GM13976 (cell line): ENCODE measurements at regions of chr7 and their contacts with region 1.

Region 1: GRCh38 chr7:44595934-44596635 is 10.3 kb upstream of the OGDH start:
- DNase-seq: no peak
- CTCF ChIP-seq: no peak

Region 2: DNA sequence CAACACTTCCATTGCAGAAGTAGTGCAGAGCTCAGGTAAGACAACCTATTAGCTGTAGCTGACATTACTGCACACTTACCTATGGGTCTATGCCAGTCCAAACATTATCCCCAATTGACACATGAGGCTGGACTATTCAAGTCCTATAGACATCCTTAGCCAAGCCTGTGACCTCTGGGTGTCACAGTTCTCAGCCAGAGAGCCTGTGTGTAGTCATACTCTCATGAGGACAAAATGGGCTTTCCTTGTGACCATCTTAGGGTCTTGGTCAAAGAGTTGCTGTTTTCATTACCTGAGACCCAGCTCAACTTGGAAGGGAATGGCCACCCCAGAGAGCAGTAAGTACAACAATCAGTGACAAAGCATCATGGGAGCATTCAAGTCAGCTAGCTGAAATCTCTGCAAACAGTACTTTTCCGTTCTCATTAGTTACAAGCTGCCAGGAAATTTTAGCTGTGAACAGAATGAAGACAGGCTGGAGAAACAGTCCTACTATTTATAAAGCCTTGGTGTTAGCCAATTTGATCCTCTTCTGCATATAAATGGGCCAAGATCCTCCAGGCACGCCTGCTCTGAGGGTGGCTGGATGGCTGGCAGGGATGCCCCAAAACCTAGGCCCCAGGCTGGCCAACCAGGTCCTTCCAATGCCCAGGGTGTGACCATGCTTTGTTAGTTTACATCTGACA is 150.0 kb before region 1 on chr7:
- in situ Hi-C with region 1: no loop called
- DNase-seq: no peak
- CTCF ChIP-seq: no peak

Region 3: DNA sequence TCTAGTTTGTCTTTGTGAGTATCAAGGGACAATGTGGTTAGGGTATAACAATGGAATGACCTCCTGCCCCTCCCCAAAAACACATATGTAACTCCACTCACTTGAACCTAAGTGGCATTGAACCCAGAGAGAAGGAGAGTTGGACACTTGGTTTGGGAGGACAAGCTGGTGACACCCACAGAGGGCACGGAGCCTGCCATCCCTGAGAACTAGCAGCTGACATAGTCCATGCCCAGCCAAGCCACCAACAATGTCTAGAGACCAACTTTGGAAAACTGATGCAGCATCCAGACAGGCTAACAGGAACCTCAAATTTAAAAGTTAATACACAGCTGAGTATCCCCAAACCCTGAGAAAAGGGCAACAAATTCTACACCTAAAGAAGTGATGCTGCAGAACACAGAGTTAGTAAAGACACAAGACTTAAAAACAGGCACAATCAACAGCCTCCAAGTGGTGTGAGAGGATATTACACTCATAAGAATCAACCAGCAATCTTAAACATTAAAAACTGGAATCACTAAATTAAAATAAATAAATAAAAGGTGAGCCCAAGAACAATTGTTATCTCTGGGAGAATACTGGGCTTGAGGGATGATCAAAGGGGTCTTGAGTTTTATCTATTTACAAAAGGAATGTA is 132.8 kb before region 1 on chr7:
- in situ Hi-C with region 1: no loop called
- DNase-seq: no peak
- CTCF ChIP-seq: no peak

Region 4: GRCh38 chr7:44847508-44847920 is 251.4 kb after region 1 on chr7:
- in situ Hi-C with region 1: loop called (anchors 10 kb)
- DNase-seq: peak; percentile 89
- CTCF ChIP-seq: peak; percentile 88